Posterior vena cava (tissue), 2 donors: ENCODE measurements at regions of chr2 and their contacts with region 1.

Region 1: DNA sequence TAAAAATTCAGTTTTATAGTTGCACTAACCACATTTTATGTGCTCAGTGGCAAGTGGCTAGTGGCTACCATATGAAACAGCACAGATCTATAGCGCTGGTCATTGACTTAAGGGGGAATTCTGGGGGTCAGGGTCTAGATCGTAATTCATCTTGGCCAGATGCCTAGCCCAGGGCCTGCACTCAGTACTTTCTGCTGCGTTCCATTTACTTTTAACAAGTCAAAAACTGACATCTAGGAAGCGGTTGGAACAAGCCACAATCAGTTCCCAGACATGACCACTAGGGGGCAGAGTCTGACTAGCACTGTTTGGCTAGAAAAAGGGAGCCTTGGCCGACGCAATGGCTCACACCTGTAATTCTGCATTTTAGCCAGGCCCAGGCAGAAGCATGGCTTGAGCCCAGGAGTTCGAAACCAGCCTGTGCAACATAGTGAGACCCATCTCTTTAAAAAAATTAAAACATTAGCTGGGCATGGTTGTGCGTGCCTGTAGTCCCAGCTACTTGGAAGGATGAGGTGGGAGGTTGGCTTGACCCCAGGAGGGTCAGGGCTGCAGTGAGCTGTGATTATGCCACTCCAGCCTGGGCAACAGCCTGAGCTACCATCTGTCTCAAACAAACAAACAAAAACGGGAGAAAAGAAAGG is 9.0 kb upstream of the TMBIM1 start:
- DNase-seq: peak; percentile 89

Region 2: DNA sequence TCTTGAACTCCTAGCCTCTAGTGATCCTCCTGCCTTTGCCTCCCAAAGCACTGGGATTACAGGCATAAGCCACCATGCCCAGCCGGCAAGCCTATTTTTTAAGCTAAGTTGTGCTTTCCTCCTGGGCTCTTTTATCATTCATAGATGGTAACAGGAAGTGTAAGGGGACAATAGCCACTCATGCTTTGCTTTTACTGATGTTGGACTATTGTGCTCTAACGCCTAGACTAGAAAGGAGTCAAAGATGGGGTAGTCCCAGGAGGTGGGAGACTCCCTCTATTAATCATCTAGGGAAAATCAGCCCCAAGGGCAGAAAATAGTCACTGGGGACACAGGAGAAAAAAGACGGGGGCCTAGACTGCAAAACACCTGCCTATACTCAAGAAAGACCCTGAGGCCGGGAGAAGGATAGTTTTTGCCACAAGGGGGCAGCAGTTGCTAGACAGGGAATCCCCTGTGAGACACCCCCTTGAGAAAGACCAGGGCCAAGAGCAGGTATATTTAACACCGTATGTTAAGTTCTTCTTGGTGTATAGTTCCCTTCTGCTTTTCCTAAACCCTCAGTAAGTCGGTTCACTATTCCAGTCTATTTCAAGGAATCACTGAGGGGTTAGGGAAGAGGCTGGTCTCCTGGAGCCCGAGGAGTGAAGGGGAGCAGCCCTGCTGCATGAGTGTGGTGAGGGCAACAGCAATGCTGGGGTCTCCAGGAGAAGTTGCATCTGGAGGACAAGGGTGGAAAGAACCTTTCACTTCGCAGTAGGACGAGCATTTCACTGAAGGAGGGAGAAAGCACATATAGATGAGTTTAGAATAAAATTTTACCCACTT is 132.4 kb before region 1 on chr2:
- intact Hi-C with region 1: no loop called
- DNase-seq: no peak

Region 3: DNA sequence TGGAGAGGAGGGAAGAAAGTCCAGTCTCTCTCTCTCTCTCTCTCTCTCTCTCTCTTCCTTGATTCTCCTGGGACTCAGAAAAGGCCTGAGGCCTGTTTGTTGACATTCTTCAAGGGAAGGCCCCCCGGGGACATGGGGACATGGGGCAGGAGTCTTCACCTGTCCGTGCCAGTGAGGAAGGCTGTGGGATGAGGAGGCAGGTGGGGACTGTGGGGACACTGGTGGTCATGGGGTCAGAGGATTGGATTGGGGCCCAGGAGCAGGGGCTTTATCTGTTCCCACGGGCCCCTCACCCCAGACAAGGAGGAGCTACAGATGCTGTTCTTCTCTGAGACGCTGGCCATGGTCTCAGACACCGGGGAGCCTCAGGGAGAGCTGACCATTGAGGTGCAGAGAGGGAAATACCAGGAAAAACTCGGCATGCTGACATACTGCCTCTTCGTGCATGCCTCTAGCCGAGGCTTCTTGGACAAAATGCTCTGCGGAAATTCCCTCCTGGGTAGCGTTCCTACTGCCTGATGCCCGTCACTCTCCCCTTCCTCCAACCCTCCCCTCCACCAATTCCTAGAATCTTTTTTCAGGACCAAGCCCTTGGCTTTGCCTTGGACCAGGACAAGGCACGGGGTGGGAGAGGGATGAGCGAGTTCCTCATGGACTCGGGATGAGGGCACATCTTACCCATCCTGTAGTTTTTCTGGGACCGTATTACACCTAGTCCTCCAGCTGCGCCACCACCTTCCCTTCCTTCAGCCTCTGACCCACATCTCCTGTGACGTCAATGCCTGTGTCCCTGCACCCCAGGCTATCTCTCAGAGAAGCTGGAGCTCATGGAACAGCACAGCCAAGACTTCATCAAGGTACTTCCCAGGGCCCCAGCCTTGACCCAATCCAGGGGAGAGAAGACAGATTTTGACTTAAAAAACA is 56.2 kb after region 1 on chr2:
- intact Hi-C with region 1: loop called (anchors 5 kb)
- DNase-seq: peak; percentile 57

Region 4: GRCh38 chr2:218370410-218371063 is 69.2 kb after region 1 on chr2:
- intact Hi-C with region 1: no loop called
- DNase-seq: peak; percentile 87

Region 5: DNA sequence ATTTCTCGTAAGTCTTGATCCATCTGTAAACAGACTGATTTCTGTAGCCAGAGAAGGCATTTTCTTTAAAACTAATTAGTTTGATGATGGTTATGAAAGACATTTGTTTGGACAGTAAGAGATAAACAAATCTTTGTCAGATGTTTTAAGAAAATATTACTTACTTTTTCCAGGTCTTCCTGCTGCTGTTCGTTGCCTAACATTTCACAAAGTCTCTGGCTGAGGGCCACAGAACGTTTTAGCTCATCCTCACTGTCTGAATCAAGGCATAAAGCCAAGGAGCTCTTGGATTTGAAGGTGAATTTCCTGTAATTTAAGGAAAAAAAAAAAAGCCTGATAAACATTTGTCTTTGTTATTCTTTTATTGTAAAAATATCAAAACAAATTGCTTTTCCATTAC is 175.4 kb after region 1 on chr2:
- intact Hi-C with region 1: no loop called
- DNase-seq: no peak